ENCODE measurements at regions of chr12 and their contacts with region 1.

Region 1: GRCh38 chr12:116325336-116325664 is 47.8 kb upstream of the MED13L start:
- DNase-seq: peak; percentile 14
- H3K4me3 Mint-ChIP-seq: no peak overlapping the region
- H3K27ac Mint-ChIP-seq: no peak overlapping the region
- H3K4me1 Mint-ChIP-seq: peaks cover 29% of the 10 kb centered on the region
- H3K27me3 Mint-ChIP-seq: no peaks in the 10 kb centered on the region

Region 2: GRCh38 chr12:116358893-116359761 is 33.8 kb after region 1 on chr12:
- CTCF ChIA-PET with region 1: interaction called, 3 read pairs
- POLR2A ChIA-PET with region 1: no interaction called
- intact Hi-C with region 1: loop called (anchors 2 kb)
- DNase-seq: peak; percentile 82
- H3K4me3 Mint-ChIP-seq: peak overlapping the region; percentile 70
- H3K27ac Mint-ChIP-seq: peak overlapping the region; percentile 69
- H3K4me1 Mint-ChIP-seq: peaks cover 26% of the 10 kb centered on the region
- H3K27me3 Mint-ChIP-seq: no peaks in the 10 kb centered on the region

Region 3: GRCh38 chr12:117143008-117143532 is 817.8 kb after region 1 on chr12:
- CTCF ChIA-PET with region 1: no interaction called
- POLR2A ChIA-PET with region 1: no interaction called
- intact Hi-C with region 1: no loop called
- DNase-seq: no peak
- H3K4me3 Mint-ChIP-seq: no peak overlapping the region
- H3K27ac Mint-ChIP-seq: no peak overlapping the region
- H3K4me1 Mint-ChIP-seq: peaks cover 4% of the 10 kb centered on the region
- H3K27me3 Mint-ChIP-seq: no peaks in the 10 kb centered on the region